AG04450 (cell line): ENCODE measurements at regions of chr18 and their contacts with region 1.

Region 1: GRCh38 chr18:12726774-12727550 is 24.1 kb downstream of the PSMG2 start:
- DNase-seq: peak; percentile 60
- H3K4me3 ChIP-seq: no peak overlapping the region
- H3K27ac ChIP-seq: no peak overlapping the region
- H3K27me3 ChIP-seq: no peaks in the 10 kb centered on the region
- CTCF ChIP-seq: peak; percentile 89

Region 2: GRCh38 chr18:12744103-12744502 is 17.1 kb after region 1 on chr18:
- CTCF ChIA-PET with region 1: interaction called, 20 read pairs
- POLR2A ChIA-PET with region 1: interaction called, 7 read pairs
- DNase-seq: peak; percentile 47
- H3K4me3 ChIP-seq: no peak overlapping the region
- H3K27ac ChIP-seq: no peak overlapping the region
- H3K27me3 ChIP-seq: no peaks in the 10 kb centered on the region
- CTCF ChIP-seq: peak; percentile 73

Region 3: DNA sequence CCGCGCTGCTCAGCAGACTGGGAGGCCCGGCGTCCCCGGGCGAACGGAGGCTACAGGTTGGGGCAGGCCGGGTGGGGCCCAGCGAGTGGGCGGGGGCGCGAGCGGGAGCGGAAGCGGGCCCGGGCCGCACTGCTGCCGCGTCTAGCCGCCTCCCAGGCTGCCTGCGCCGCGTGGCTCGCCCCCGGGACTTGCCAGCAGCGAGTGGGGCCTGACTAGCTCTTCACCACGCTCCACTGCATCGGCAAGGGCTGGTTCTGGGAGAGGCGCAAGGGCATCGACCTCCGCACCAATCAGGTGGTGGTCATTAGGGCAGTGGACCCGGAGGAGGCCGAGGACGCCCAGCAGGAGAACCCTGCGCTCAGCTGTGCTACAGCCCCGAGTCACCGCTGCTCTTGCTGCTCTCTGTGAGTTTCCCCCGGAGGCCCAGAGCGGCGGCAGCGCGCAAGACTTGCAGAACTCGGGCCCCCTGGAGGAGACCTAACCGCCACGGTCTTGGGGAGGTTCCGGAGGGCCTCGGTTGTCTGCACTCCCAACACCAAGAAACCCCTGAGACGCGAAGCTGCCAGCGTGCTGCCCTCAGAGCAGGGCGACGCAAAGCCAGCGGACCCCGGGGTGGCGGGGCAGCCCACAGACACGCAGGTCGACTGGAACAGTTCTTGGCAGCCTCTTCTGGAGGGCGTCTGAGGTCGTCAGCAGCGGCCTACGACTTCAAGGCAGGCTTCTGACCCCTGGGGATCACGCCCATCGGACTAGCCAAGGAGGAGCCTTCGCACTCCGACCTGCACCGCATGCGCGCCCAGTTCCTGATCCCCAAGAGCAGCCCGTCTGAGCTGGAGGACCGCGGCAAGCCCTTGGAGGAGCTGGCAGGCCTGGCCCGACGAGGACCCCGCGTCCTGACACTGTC is 184.3 kb after region 1 on chr18:
- CTCF ChIA-PET with region 1: interaction called, 14 read pairs
- POLR2A ChIA-PET with region 1: no interaction called
- DNase-seq: no peak
- H3K4me3 ChIP-seq: no peak overlapping the region
- H3K27ac ChIP-seq: no peak overlapping the region
- H3K27me3 ChIP-seq: peaks cover 14% of the 10 kb centered on the region
- CTCF ChIP-seq: no peak